ENCODE measurements at regions of chr7 and their contacts with region 1.

Region 1: GRCh38 chr7:97133159-97133558 is 15.7 kb downstream of the SDHAF3 start:
- DNase-seq: no peak
- H3K4me3 Mint-ChIP-seq: no peak overlapping the region
- H3K27ac Mint-ChIP-seq: no peak overlapping the region
- H3K4me1 Mint-ChIP-seq: no peaks in the 10 kb centered on the region
- H3K27me3 Mint-ChIP-seq: no peaks in the 10 kb centered on the region

Region 2: DNA sequence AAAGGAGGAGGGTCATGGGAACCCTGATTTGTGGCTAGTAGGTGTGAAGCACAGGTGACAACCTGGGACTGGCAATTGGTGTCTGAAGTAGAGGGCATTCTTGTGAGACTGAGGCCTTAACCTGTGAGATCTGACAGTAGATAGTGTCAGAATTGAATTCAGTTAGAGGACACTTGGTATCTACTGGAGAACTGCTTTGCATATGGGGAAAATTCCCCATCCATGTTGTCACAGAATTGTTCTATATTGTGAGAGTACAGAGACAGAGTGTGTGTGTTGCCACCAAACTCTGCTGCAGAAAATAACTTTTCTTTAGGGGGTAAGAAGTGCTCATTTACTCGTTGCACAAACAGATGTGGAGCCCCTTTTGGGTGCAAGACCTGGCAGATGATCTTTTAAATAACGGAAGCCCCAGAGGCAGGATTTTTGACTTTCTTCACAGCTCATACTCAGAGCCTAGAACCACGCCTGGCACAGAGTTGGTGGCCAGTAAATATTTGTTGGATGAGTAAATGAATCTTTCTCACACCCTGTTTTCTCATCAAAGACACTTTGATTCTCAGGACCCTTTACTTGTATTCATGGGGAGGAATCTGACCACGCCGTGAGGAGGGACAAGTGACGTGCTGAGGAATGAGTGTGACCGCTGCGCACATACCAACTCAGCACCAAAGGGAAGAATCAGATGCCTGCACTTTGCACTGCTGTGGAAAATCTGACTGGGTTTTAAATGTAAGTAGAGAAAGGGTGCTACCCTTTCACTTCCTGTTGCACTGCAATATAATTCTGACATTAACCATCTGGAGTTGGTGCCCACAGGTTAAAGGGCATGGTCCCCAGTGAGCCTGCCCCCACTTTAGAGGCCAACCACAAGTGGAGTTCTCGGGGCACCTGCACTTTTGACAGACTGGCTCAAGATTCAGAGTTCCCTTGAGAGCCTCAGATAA is 54.9 kb before region 1 on chr7:
- CTCF ChIA-PET with region 1: no interaction called
- POLR2A ChIA-PET with region 1: no interaction called
- DNase-seq: no peak
- H3K4me3 Mint-ChIP-seq: no peak overlapping the region
- H3K27ac Mint-ChIP-seq: no peak overlapping the region
- H3K4me1 Mint-ChIP-seq: no peaks in the 10 kb centered on the region
- H3K27me3 Mint-ChIP-seq: peaks cover 15% of the 10 kb centered on the region

Region 3: GRCh38 chr7:97088364-97088763 is 44.8 kb before region 1 on chr7:
- CTCF ChIA-PET with region 1: no interaction called
- POLR2A ChIA-PET with region 1: no interaction called
- DNase-seq: no peak
- H3K4me3 Mint-ChIP-seq: no peak overlapping the region
- H3K27ac Mint-ChIP-seq: no peak overlapping the region
- H3K4me1 Mint-ChIP-seq: no peaks in the 10 kb centered on the region
- H3K27me3 Mint-ChIP-seq: peaks cover 18% of the 10 kb centered on the region

Region 4: GRCh38 chr7:97117372-97118188 is 15.6 kb before region 1 on chr7 and contains the start of gene SDHAF3:
- CTCF ChIA-PET with region 1: no interaction called
- POLR2A ChIA-PET with region 1: interaction called, 11 read pairs
- DNase-seq: peak; percentile 99
- H3K4me3 Mint-ChIP-seq: peak within 1 kb of the TSS; percentile 88
- H3K27ac Mint-ChIP-seq: peak within 1 kb of the TSS; percentile 88
- H3K4me1 Mint-ChIP-seq: peaks cover 39% of the 10 kb centered on the region
- H3K27me3 Mint-ChIP-seq: no peaks in the 10 kb centered on the region
- total RNA-seq, gene SDHAF3: 16.0 to 16.1 TPM

Measured in activated CD4-positive, alpha-beta memory T cell treated with anti-CD3 and anti-CD28 coated beads, Interleukin-2, amount 10 ng/mL, durations not matched to agents 7 days and 5 days (primary cell).